Vagina (tissue), 2 donors: ENCODE measurements at regions of chr2 and their contacts with region 1.

Region 1: DNA sequence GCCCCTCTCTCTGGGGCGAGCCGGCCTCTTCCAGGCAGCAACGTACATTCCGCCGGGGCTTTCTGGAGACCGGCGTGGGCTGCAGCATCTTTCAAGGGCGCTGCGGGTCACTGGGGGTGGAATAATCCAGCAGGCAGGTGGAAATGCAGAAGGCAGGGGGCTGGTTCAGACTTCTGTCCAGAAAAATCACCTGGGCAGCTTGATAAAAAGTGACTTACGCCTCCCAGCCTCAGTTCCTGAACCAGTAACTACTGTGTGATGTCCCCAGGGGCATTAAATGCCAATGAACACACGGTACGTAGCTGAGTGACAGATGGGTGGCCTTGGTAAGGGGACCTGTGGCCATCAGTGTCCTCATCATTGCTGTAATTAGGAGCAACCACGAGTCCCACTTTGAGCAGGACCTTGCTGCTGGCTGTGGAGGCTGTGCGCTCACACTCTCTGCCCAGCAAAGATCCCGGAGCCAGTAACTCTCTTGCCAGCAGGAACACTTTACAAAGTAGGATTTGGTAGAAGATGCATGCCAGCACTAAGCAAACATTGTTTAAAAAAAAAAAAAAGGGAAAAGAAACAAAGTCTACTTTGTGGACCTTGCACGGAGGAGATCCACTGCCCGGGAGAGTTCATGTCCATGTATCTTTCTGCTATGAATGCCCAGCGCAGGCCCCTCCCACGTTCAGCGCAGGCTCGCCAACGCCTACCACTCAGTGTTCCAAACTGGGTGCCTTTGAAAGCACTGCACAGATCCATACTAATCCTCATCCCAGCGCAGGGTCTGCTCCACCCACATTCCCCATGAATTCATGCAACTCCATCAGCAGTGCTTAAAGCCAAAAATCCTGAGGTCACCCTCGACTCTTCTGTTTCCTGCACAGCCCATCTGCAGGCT is 177.3 kb downstream of the HDAC4 start:
- DNase-seq: no peak
- H3K4me3 ChIP-seq: no peak overlapping the region
- H3K27ac ChIP-seq: peak overlapping the region; percentile 86
- H3K4me1 ChIP-seq: peaks cover 77% of the 10 kb centered on the region
- H3K27me3 ChIP-seq: no peaks in the 10 kb centered on the region
- CTCF ChIP-seq: no peak
- POLR2A ChIP-seq: no peak

Region 2: DNA sequence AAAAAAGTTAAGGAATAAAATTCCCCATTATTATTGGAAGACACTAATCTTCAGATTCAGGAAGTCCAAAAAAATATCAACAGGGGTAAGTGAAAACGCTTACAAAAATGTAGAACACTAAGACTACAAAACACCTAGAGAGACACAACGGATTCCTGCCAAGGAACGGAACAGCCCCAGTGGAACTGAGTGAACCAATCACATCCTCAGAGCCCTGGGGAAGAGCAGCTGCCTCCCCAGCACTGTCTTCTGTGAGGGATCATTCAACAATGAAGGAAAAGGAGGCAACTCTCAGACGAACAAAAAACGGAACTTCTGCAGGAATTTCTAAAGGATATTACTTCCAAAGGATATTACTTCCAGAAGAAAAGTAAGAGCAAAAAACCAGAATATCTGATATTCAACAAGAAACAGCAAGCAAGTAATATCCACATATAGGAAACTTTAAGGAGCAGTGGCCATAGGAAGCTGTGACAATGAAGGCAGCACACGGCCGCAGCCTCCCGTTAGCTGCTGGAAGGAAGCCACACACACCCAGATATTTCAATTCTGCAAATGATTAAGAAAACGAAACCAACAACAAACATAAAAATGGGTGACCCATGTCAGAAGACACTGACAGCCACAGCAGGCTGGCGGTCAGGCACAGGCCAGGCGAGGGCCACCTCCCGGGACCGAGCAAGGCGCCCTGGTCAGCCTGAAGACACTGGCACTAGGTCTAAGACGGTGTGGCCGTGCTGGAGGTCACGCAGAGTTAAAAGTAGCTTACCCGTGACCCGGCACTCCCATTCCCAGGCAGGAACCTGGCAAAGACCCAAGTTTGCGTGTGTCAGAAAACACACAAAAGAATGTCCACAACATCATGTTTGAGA is 95.5 kb after region 1 on chr2:
- intact Hi-C with region 1: loop called (anchors 10 kb)
- DNase-seq: no peak
- H3K4me3 ChIP-seq: peak overlapping the region; percentile 27 to 34
- H3K27ac ChIP-seq: peak overlapping the region; percentile 65
- H3K4me1 ChIP-seq: peaks cover 42% of the 10 kb centered on the region
- H3K27me3 ChIP-seq: no peaks in the 10 kb centered on the region
- CTCF ChIP-seq: no peak
- POLR2A ChIP-seq: no peak